Activated CD4-positive, alpha-beta memory T cell treated with anti-CD3 and anti-CD28 coated beads for 36 hours (primary cell): ENCODE measurements at regions of chr1 and their contacts with region 1.

Region 1: GRCh38 chr1:182249201-182249676 is 142.4 kb downstream of the GLUL start:
- DNase-seq: peak; percentile 84
- H3K4me3 Mint-ChIP-seq: no peak overlapping the region
- H3K27ac Mint-ChIP-seq: peak overlapping the region; percentile 80
- H3K4me1 Mint-ChIP-seq: peaks cover 22% of the 10 kb centered on the region
- H3K27me3 Mint-ChIP-seq: peaks cover 3% of the 10 kb centered on the region

Region 2: GRCh38 chr1:181397845-181398244 is 851.4 kb before region 1 on chr1:
- CTCF ChIA-PET with region 1: no interaction called
- POLR2A ChIA-PET with region 1: no interaction called
- intact Hi-C with region 1: loop called (anchors 5 kb)
- DNase-seq: peak; percentile 39
- H3K4me3 Mint-ChIP-seq: no peak overlapping the region
- H3K27ac Mint-ChIP-seq: peak overlapping the region; percentile 53
- H3K4me1 Mint-ChIP-seq: peaks cover 38% of the 10 kb centered on the region
- H3K27me3 Mint-ChIP-seq: no peaks in the 10 kb centered on the region

Region 3: GRCh38 chr1:182143154-182143657 is 106.0 kb before region 1 on chr1:
- CTCF ChIA-PET with region 1: interaction called, 19 read pairs
- POLR2A ChIA-PET with region 1: interaction called, 4 read pairs
- intact Hi-C with region 1: loop called (anchors 2 kb)
- DNase-seq: peak; percentile 91
- H3K4me3 Mint-ChIP-seq: no peak overlapping the region
- H3K27ac Mint-ChIP-seq: no peak overlapping the region
- H3K4me1 Mint-ChIP-seq: peaks cover 6% of the 10 kb centered on the region
- H3K27me3 Mint-ChIP-seq: peaks cover 4% of the 10 kb centered on the region

Region 4: DNA sequence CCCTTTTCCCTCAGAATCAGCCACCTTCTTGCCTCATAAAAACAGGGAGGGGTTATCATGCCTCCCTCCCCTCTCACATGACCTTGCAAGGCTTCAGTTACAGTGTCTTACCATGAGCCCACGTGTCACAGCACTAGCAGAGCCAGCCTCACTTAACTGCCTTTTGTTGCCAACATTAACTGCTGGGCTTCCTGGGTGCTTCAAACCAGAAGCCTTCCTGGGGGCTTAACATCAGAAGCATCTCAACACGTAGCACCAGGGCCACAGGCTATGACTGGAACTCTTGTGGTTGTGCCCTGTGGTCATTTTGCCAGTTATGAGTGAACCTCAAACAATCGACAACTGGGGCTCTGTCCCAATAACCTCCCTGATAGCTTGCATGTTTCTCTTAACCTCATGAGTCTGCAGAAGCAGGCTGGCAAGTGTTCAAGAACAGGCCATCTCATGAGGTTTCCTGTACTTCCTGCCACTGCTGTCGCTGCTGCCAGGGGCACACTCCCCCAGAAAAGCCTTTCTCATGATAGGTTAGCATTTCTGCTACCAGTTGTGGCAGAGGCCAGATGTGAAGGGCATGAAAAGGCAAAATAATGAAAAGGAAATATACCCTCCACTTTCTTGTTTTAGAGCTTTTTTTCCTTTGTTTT is 10.1 kb after region 1 on chr1:
- CTCF ChIA-PET with region 1: interaction called, 4 read pairs
- POLR2A ChIA-PET with region 1: interaction called, 5 read pairs
- intact Hi-C with region 1: loop called (anchors 1 kb)
- DNase-seq: peak; percentile 82
- H3K4me3 Mint-ChIP-seq: no peak overlapping the region
- H3K27ac Mint-ChIP-seq: peak overlapping the region; percentile 88
- H3K4me1 Mint-ChIP-seq: peaks cover 28% of the 10 kb centered on the region
- H3K27me3 Mint-ChIP-seq: no peaks in the 10 kb centered on the region

Region 5: GRCh38 chr1:182430263-182431068 is 181.2 kb after region 1 on chr1:
- CTCF ChIA-PET with region 1: no interaction called
- POLR2A ChIA-PET with region 1: no interaction called
- intact Hi-C with region 1: loop called (anchors 1 kb)
- DNase-seq: peak; percentile 62
- H3K4me3 Mint-ChIP-seq: no peak overlapping the region
- H3K27ac Mint-ChIP-seq: no peak overlapping the region
- H3K4me1 Mint-ChIP-seq: peaks cover 22% of the 10 kb centered on the region
- H3K27me3 Mint-ChIP-seq: no peaks in the 10 kb centered on the region

Region 6: DNA sequence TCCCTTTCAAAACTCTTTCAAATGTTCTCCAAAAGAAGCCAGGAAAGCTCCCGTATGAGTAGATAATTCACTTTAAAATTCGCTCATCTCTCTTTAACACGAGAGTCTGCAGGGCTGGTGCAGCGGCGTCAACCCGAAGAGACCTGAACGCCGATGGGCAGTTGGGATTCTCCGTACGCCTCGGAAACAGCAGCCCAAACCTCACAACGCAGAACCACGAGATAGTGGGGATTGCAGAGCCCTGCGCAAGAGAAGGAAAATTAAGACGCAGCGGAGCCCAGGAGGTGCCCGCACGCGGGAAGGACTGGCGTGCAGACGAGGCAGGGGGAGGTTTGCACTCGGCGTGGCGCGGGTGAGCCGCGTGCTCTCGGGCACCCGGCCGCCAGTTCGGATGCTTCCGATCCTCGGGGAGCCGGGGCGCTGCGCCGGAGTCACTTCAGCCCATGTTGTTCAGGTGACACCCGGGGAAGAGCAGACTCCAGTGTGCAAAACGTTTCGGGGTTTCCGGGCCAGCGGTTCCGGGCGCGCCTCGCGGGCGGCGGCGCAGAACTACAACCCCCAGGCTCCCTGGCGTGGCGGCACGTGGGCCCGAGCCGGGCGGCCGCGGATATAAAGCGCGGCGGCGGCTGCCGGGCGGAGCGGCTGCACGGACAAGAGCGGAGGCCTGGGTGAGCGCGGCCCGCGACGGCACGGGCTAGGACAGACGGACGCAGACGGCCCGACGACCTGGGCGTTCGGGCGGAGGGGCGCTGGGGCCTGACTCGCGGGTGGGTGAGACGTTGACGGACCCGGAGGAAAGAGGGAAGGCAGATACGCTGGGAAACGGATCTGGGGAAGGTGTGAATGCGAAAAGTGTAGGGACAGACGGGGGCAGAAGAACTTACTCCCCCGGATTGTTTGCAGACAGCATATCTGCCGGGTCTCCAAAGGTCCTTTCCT is 540.2 kb after region 1 on chr1 and contains the start of gene NPL:
- CTCF ChIA-PET with region 1: no interaction called
- POLR2A ChIA-PET with region 1: no interaction called
- intact Hi-C with region 1: loop called (anchors 5 kb)
- DNase-seq: peak; percentile 90
- H3K4me3 Mint-ChIP-seq: peak within 1 kb of the TSS; percentile 80
- H3K27ac Mint-ChIP-seq: no peak within 1 kb of the TSS
- H3K4me1 Mint-ChIP-seq: peaks cover 13% of the 10 kb centered on the region
- H3K27me3 Mint-ChIP-seq: no peaks in the 10 kb centered on the region
- total RNA-seq, gene NPL: 3.8 to 7.8 TPM